ENCODE measurements at regions of chr3 and their contacts with region 1.

Region 1: DNA sequence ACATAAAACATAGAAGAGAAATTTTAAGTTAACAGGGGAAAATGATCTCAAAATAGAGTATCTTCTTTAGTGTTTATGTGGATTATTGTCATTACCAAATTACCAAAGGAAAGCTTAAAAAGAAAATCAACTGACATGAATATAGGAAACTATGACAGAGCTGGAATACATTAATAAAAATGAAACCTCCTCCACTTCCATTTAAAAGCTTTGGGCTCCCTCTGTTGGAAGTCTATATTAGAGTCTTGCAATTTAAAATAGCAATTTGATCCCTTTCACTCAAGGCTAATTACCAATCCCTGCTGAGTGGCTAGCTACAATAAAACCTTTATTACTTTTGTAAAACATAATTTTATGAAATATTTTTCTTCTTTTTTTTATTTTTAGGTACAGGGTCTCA is 61.4 kb upstream of the IMPG2 start:
- DNase-seq: no peak
- H3K4me3 Mint-ChIP-seq: no peak overlapping the region
- H3K27ac Mint-ChIP-seq: no peak overlapping the region
- H3K4me1 Mint-ChIP-seq: peaks cover 50% of the 10 kb centered on the region
- H3K27me3 Mint-ChIP-seq: no peaks in the 10 kb centered on the region

Region 2: DNA sequence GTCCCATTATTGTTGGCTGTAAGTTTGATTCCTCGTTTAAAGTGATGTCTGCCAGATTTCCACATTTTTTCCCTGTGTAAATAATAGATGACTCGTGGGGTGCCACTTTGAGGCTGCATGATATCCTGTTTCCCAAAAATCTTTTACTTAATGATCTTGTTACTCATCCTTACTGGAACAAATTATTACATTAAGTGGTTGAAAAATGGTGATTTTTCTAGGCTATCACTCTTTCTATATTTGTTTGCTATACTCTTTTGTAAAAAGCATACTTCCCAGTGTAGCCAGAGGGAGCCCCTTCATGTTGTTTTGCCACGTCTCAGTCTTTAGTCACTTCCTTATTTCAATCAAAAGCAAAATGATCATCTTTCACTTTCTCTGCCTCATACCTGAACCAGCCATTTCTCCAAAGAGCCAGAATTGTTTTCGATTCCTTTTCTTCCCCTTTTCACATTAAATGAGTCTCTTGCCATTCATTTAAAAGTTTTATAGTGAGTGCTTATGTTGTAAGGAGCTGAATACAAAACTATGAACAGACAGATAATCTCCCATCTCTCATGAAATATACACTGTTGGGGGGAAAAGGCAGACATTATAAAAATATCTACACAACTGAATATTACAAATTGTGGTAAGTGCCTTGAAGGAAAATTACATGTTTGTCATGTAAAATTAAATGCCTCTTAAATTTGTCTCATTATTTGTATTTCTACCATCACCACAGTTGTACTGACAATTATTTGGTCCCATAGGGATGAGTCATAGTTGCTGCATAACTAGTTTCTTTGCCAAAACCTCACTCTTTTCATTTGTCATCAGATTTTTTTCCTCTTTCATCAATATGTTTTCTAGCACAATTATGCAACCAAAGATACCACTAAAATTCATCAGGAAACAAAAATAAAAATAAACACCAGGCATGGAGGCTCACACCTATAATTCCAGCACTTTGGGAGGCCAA is 730.9 kb before region 1 on chr3:
- CTCF ChIA-PET with region 1: no interaction called
- POLR2A ChIA-PET with region 1: no interaction called
- intact Hi-C with region 1: loop called (anchors 1 kb)
- DNase-seq: peak; percentile 36
- H3K4me3 Mint-ChIP-seq: peak overlapping the region; percentile 18
- H3K27ac Mint-ChIP-seq: peak overlapping the region; percentile 41
- H3K4me1 Mint-ChIP-seq: peaks cover 15% of the 10 kb centered on the region
- H3K27me3 Mint-ChIP-seq: no peaks in the 10 kb centered on the region

Region 3: GRCh38 chr3:100932491-100932890 is 449.3 kb before region 1 on chr3:
- CTCF ChIA-PET with region 1: no interaction called
- POLR2A ChIA-PET with region 1: no interaction called
- intact Hi-C with region 1: no loop called
- DNase-seq: no peak
- H3K4me3 Mint-ChIP-seq: no peak overlapping the region
- H3K27ac Mint-ChIP-seq: no peak overlapping the region
- H3K4me1 Mint-ChIP-seq: no peaks in the 10 kb centered on the region
- H3K27me3 Mint-ChIP-seq: peaks cover 7% of the 10 kb centered on the region

Region 4: GRCh38 chr3:101069901-101070798 is 311.7 kb before region 1 on chr3:
- CTCF ChIA-PET with region 1: interaction called, 36 read pairs
- POLR2A ChIA-PET with region 1: no interaction called
- intact Hi-C with region 1: loop called (anchors 1 kb)
- DNase-seq: peak; percentile 83
- H3K4me3 Mint-ChIP-seq: no peak overlapping the region
- H3K27ac Mint-ChIP-seq: no peak overlapping the region
- H3K4me1 Mint-ChIP-seq: peaks cover 5% of the 10 kb centered on the region
- H3K27me3 Mint-ChIP-seq: peaks cover 16% of the 10 kb centered on the region

Region 5: GRCh38 chr3:101170062-101170771 is 211.6 kb before region 1 on chr3:
- CTCF ChIA-PET with region 1: no interaction called
- POLR2A ChIA-PET with region 1: no interaction called
- intact Hi-C with region 1: loop called (anchors 1 kb)
- DNase-seq: no peak
- H3K4me3 Mint-ChIP-seq: no peak overlapping the region
- H3K27ac Mint-ChIP-seq: no peak overlapping the region
- H3K4me1 Mint-ChIP-seq: peaks cover 15% of the 10 kb centered on the region
- H3K27me3 Mint-ChIP-seq: peaks cover 4% of the 10 kb centered on the region

Region 6: DNA sequence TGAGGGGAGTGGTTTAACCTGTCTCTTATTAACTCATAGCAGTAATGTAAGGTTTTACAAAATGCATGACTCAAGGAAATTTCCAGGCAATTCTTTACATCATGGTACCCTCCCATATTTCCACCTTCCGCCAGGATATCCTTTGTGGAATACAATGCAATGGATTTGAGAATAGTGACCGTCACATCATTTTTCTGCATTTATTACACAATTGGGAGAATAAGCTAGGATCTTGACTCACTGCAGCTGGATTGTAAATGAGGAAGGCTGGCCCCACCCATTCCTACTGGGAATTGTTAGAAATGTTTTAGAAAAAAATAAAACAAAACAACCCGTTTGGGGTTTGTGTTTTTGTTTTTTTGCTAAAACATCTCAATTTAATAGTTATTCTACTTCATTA is 158.8 kb before region 1 on chr3:
- CTCF ChIA-PET with region 1: no interaction called
- POLR2A ChIA-PET with region 1: no interaction called
- intact Hi-C with region 1: loop called (anchors 1 kb)
- DNase-seq: no peak
- H3K4me3 Mint-ChIP-seq: no peak overlapping the region
- H3K27ac Mint-ChIP-seq: no peak overlapping the region
- H3K4me1 Mint-ChIP-seq: peaks cover 15% of the 10 kb centered on the region
- H3K27me3 Mint-ChIP-seq: no peaks in the 10 kb centered on the region

Region 7: GRCh38 chr3:101466465-101467309 is 84.9 kb after region 1 on chr3:
- CTCF ChIA-PET with region 1: no interaction called
- POLR2A ChIA-PET with region 1: no interaction called
- intact Hi-C with region 1: loop called (anchors 5 kb)
- DNase-seq: peak; percentile 86
- H3K4me3 Mint-ChIP-seq: peak overlapping the region; percentile 74
- H3K27ac Mint-ChIP-seq: peak overlapping the region; percentile 84
- H3K4me1 Mint-ChIP-seq: peaks cover 51% of the 10 kb centered on the region
- H3K27me3 Mint-ChIP-seq: no peaks in the 10 kb centered on the region

Region 8: GRCh38 chr3:101676765-101677435 is 295.1 kb after region 1 on chr3 and contains the start of gene ZBTB11:
- CTCF ChIA-PET with region 1: no interaction called
- POLR2A ChIA-PET with region 1: no interaction called
- intact Hi-C with region 1: loop called (anchors 5 kb)
- DNase-seq: peak; percentile 100
- H3K4me3 Mint-ChIP-seq: peak within 1 kb of the TSS; percentile 93
- H3K27ac Mint-ChIP-seq: peak within 1 kb of the TSS; percentile 91
- H3K4me1 Mint-ChIP-seq: peaks cover 57% of the 10 kb centered on the region
- H3K27me3 Mint-ChIP-seq: no peaks in the 10 kb centered on the region
- total RNA-seq, gene ZBTB11: 28.0 to 30.3 TPM